ENCODE measurements at regions of chr3 and their contacts with region 1.

Region 1: GRCh38 chr3:14124615-14125190 is at the starts of genes CHCHD4 and TMEM43:
- DNase-seq: peak; percentile 100
- ATAC-seq: peak; percentile 91 to 95
- H3K4me3 ChIP-seq: peak within 1 kb of the TSS; percentile 72
- H3K27ac ChIP-seq: peak within 1 kb of the TSS; percentile 99
- H3K4me1 ChIP-seq: peaks cover 19% of the 10 kb centered on the region
- H3K27me3 ChIP-seq: no peaks in the 10 kb centered on the region
- total RNA-seq, gene CHCHD4: 21.0 to 30.9 (median 27.4) TPM
- total RNA-seq, gene TMEM43: 52.4 to 103 (median 68.7) TPM

Region 2: DNA sequence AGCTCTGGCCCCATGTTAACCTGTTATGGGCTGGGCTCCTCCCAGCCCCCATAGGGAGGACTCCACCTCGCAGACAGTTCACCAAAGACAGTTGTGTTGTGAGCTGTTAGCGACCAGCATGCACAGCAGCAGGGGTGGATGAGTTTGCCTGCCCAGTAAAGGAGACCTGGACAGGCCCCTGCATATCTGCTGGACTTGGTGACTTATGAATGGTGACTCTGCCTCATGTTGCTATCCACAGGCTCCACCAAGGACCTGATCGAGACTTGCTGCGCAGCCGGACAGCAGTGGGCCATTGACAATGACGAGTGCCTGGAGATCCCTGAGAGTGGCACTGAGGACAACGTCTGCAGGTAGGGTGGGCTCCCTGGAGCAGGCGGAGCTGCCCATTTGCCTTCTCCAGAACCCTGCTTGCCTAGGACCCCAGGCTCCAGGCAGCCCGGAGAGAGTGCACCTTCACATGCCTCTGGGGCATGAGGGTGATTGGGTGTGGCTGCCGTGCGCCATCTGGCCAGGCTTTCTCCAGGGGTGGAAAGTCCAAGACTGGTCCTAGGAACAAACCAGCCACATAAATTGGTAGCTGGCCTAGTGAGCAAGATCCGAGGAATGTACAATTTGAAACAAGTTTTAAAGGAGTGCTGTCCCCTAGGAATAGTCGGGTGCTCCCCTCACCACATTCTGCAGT is 516.7 kb before region 1 on chr3:
- intact Hi-C with region 1: no loop called
- DNase-seq: no peak
- ATAC-seq: no peak
- H3K4me3 ChIP-seq: no peak overlapping the region
- H3K27ac ChIP-seq: no peak overlapping the region
- H3K4me1 ChIP-seq: no peaks in the 10 kb centered on the region
- H3K27me3 ChIP-seq: no peaks in the 10 kb centered on the region

Region 3: GRCh38 chr3:13881536-13882410 is 242.9 kb before region 1 on chr3:
- intact Hi-C with region 1: no loop called
- DNase-seq: no peak
- ATAC-seq: no peak
- H3K4me3 ChIP-seq: no peak overlapping the region
- H3K27ac ChIP-seq: no peak overlapping the region
- H3K4me1 ChIP-seq: peaks cover 2% of the 10 kb centered on the region
- H3K27me3 ChIP-seq: no peaks in the 10 kb centered on the region

Region 4: DNA sequence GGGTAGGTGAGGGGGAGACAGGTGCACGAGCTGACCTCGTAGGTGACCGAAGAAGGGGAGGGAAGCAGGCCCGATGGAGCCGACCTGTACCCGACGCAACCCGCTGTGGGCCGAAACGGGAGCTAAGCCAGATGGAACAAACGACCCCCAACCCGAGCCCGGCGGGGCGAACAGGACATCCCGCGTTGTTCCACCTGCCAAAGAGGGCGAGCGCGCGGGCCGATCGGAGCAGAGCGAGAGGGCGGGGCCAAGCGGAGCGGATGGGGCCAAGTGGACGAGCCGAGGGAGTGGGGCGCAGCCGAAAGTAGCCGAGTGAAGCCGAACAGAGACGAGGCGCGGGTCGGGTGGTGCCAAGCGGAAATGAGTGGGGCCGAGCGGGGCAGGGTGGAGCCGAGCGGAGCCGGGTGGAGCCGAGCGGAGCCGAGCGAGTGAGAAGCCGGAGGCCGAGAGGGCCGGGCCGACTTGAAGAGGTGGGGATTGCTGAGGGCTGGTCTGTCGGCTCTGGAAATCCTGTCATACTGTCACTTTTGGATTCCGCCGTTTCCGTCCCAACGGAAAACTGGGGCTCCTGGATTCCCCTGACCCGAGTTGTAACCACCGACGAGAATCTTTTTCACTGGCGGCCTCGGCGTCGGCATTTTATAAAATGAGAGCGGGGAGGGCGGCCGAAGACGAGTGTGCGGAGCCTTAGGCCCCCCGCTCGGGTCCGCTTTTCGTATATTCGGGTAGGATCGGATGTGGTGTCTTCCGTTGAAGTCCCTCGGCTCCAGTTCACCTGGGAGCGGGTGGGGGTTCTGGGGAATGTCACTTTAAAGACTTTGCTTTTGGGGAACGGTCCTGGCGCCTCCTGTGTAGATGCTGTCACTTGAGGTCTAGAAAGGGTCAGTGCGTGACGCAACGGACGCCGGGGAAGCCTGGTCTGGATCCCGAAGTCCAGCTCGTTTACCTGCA is 229.3 kb before region 1 on chr3:
- intact Hi-C with region 1: loop called in 1 of 4 experiments (anchors 10 kb)
- DNase-seq: peak; percentile 96 to 99 (median 98)
- ATAC-seq: peak; percentile 98 to 99
- H3K4me3 ChIP-seq: peak overlapping the region; percentile 71
- H3K27ac ChIP-seq: peak overlapping the region; percentile 5
- H3K4me1 ChIP-seq: peaks cover 3% of the 10 kb centered on the region
- H3K27me3 ChIP-seq: no peaks in the 10 kb centered on the region

Region 5: DNA sequence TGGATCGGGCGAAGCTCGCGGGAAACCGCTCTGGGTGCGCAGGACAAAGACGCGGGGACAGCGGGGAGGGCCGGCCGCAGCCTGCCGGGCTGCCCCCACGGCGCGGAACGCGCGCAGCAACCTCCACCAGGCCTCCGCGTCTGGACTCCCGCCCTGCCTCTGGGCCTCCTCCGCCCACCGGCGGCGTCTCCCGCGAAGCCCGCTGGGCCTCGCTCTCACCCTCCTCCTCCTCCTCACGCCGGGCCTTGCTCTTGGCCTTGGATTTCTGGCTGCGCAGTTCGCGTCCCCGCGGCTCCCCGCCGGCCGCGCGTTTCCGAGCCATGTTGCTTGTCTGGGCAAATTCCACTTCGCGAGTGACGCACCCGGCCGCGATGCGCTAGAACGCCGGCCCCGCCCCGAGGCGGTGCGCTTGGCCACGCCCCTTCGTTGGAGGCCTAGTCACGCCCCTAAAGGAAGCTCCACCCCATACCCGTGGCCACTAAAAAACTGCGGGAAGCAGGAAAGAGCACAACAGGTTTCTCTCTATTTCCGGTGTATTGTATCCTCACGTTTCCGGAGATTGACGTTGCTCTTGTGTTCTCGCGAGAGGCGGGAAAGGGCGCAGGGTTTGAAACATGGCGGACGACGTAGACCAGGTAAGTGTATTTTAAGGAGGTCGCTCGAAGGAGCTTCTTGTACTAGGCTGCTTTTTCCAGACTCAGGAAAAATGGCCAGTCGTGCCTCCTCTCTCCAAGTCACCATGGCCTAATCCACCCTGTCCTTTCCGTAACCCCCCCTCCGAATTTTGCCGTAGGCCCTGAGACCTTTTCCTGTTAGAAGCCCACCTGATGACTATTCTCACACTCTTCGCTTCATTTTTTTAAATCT is 53.8 kb after region 1 on chr3 and contains the starts of genes LSM3 and XPC:
- intact Hi-C with region 1: loop called in 2 of 4 experiments (anchors 2 to 5 kb)
- DNase-seq: peak; percentile 97 to 98 (median 98)
- ATAC-seq: peak; percentile 99 to 100
- H3K4me3 ChIP-seq: peak within 1 kb of the TSS; percentile 91
- H3K27ac ChIP-seq: peak within 1 kb of the TSS; percentile 96
- H3K4me1 ChIP-seq: peaks cover 2% of the 10 kb centered on the region
- H3K27me3 ChIP-seq: no peaks in the 10 kb centered on the region
- total RNA-seq, gene LSM3: 13.5 to 16.5 (median 15.2) TPM
- total RNA-seq, gene XPC: 10.7 to 16.1 (median 14.4) TPM